HepG2 (cell line): ENCODE measurements at regions of chr4 and their contacts with region 1.

Region 1: DNA sequence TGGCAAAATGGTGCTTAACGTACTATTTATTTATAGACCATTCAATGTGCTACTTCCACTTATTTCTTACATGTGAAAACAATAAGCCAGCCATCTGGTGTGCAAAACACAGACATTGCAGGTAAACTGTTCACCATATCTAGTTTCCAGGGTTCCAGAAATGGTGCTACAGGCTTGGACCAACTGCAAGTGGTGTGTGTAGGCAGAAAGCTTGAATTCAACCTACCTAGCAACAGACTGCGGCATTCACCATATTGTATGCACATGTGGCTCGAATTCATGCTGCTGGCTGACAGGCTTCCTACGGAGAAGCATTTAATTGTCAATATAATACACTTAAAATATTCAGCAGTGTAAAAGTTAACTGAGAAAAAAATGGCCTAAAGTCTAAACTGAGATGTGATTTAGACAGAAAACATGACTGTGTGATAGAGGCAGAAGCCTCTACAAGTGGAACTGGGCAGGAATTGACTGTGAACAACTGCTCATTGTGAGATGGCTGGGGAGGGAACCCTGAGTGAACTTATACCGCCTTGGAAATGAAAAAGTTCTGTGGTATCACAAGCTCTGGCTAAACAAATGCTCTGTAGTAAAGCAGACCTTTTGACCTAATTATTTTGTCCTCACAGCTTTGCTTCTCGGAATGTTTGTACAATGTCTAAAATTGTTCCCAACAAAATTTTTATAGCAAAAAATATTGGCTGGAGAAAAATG is 434.7 kb downstream of the GRIA2 start:
- DNase-seq: no peak
- ATAC-seq: no peak
- H3K4me3 ChIP-seq: no peak overlapping the region
- H3K27ac ChIP-seq: no peak overlapping the region
- H3K4me1 ChIP-seq: no peaks in the 10 kb centered on the region
- H3K27me3 ChIP-seq: no peaks in the 10 kb centered on the region
- CTCF ChIP-seq: no peak
- EP300 ChIP-seq: no peak
- POLR2A ChIP-seq: no peak
- RAD21 ChIP-seq: no peak

Region 2: GRCh38 chr4:157616741-157617472 is 38.3 kb before region 1 on chr4:
- CTCF ChIA-PET with region 1: no interaction called
- POLR2A ChIA-PET with region 1: no interaction called
- in situ Hi-C with region 1: no loop called
- intact Hi-C with region 1: no loop called
- DNase-seq: no peak
- ATAC-seq: no peak
- H3K4me3 ChIP-seq: no peak overlapping the region
- H3K27ac ChIP-seq: no peak overlapping the region
- H3K4me1 ChIP-seq: no peaks in the 10 kb centered on the region
- H3K27me3 ChIP-seq: no peaks in the 10 kb centered on the region
- CTCF ChIP-seq: no peak
- EP300 ChIP-seq: no peak
- POLR2A ChIP-seq: no peak
- RAD21 ChIP-seq: no peak

Region 3: GRCh38 chr4:157942017-157942416 is 286.8 kb after region 1 on chr4:
- CTCF ChIA-PET with region 1: no interaction called
- POLR2A ChIA-PET with region 1: no interaction called
- in situ Hi-C with region 1: no loop called
- intact Hi-C with region 1: loop called (anchors 10 kb)
- DNase-seq: no peak
- ATAC-seq: no peak
- H3K4me3 ChIP-seq: no peak overlapping the region
- H3K27ac ChIP-seq: no peak overlapping the region
- H3K4me1 ChIP-seq: no peaks in the 10 kb centered on the region
- H3K27me3 ChIP-seq: no peaks in the 10 kb centered on the region; a peak in 1 of 5 replicates
- CTCF ChIP-seq: no peak
- EP300 ChIP-seq: no peak
- POLR2A ChIP-seq: no peak
- RAD21 ChIP-seq: no peak